Calu3 (cell line): ENCODE measurements at regions of chr14 and their contacts with region 1.

Region 1: DNA sequence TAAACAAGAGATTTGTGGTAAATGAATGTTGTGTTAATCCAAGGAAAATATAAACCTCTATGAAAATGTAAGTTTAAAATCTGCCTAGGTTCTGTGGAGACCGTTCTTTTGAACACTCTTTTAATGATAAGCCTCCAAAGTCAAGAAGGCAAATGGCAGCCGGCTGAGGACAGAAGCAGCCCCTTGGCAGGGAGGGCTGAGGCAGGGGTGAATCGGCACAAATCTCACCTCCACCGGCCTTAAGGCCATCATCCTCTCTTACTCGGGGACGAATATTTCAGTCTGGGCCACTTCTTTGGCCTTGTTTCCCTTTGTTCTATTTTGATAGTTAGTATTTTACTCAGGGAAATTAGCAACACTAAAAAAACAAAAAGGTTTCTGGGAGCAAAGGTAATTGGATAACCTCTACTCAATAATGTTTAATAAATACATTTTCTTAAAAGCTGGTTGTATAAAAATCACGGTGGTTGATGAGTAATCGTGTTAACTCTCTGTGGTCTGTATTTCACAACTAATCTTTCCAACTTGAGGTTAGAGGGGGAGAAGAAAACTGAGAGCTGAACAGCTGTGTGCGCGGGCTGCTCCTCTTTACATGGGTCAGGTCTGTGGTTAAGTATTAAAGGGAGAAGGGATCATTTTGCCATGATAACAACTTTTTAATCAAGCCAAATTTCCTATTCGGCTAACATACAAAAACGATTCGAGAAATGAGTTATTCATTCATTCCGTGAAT is 18.6 kb downstream of the LGMN start:
- DNase-seq: no peak
- H3K4me3 Mint-ChIP-seq: no peak overlapping the region
- H3K27ac Mint-ChIP-seq: peak overlapping the region; percentile 45
- H3K4me1 Mint-ChIP-seq: peaks cover 29% of the 10 kb centered on the region
- H3K27me3 Mint-ChIP-seq: no peaks in the 10 kb centered on the region
- CTCF ChIP-seq: no peak

Region 2: GRCh38 chr14:91897106-91897701 is 832.6 kb before region 1 on chr14:
- CTCF ChIA-PET with region 1: no interaction called
- intact Hi-C with region 1: no loop called
- DNase-seq: no peak
- H3K4me3 Mint-ChIP-seq: no peak overlapping the region
- H3K27ac Mint-ChIP-seq: no peak overlapping the region
- H3K4me1 Mint-ChIP-seq: no peaks in the 10 kb centered on the region
- H3K27me3 Mint-ChIP-seq: no peaks in the 10 kb centered on the region
- CTCF ChIP-seq: no peak

Region 3: DNA sequence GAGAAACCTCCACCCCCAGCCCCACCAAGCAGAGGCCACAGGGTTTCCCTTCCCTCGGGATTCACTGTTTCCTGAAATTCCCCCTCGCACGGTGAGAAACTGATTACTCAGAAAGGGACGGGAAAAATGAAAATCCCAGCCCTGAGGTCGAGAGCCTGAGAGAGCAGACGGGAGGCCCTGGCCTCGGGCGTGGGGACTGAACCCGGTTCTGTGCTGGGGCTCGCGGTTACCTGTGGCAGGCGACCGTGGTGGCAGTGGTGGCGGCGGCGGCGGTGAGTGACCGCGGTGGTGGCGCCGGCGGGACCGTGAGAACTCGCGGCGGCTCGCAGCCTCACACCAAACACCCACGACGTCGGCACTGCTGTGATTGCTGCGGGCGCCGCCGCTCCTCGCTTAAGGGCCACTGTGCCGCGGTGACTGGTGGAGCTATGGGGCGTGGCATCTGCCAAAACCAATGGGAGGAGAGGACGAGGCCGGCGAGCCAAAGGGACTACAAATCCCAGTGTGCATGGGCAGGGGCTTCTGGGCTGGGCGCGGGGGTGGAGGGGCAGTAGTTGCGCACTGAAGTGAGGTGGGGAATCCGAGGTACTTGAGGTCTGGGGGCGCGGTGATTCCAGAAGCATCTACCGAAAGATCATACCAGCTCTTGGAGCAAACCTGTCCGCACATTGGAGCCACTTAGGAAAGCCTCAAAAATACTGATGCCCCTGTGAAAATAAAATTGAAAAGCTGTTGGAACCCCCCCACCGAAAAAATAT is 18.6 kb after region 1 on chr14 and contains the start of gene LGMN:
- CTCF ChIA-PET with region 1: interaction called, 12 read pairs
- intact Hi-C with region 1: no loop called
- DNase-seq: peak; percentile 95
- H3K4me3 Mint-ChIP-seq: peak within 1 kb of the TSS; percentile 92
- H3K27ac Mint-ChIP-seq: peak within 1 kb of the TSS; percentile 11
- H3K4me1 Mint-ChIP-seq: peaks cover 19% of the 10 kb centered on the region
- H3K27me3 Mint-ChIP-seq: no peaks in the 10 kb centered on the region
- CTCF ChIP-seq: no peak
- total RNA-seq, gene LGMN: 64.9 and 84.6 TPM in 2 replicates

Region 4: GRCh38 chr14:92914087-92914656 is 184.4 kb after region 1 on chr14:
- CTCF ChIA-PET with region 1: no interaction called
- intact Hi-C with region 1: no loop called
- DNase-seq: peak; percentile 37
- H3K4me3 Mint-ChIP-seq: no peak overlapping the region
- H3K27ac Mint-ChIP-seq: no peak overlapping the region
- H3K4me1 Mint-ChIP-seq: no peaks in the 10 kb centered on the region
- H3K27me3 Mint-ChIP-seq: peaks cover 66% of the 10 kb centered on the region
- CTCF ChIP-seq: no peak